GM12878 (cell line): ENCODE measurements at regions of chr9 and their contacts with region 1.

Region 1: DNA sequence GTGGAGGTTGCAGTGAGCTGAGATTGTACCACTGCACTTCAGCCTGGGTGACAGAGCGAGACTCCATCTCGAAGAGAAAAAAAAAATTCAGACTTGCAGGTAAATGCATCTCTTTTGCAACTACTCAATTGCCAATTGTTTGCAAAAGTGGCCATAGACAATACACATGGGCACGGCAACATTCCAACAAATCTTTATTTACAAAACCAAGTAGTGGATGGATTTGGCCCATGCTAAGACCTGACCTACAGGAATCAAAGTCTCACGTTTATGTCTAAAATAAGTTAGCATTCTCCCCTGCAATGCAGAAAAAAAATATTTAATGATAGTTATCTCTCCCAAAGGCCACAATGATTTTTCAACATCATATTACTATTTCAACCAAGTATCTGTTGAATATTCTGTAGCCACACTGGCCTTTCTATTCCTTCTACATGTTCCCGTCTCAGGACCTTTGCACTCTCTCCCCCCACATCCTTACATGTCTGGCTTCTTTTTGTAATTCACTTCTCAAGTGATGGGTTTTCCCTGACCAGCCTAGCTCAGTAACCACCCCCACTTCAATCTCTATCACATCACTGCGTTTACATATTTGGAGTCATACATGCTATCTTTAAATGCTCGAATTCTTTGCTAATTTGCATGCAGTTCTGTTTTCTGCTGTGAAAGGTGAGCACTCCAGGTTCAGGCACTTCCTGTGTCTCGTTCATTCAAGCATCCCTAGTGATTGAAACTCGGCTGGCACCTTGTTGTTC is 54.2 kb downstream of the FNBP1 start:
- DNase-seq: peak; percentile 99
- ATAC-seq: peak; percentile 65
- H3K4me3 ChIP-seq: peak overlapping the region; percentile 33
- H3K27ac ChIP-seq: peak overlapping the region; percentile 100
- H3K4me1 ChIP-seq: peaks cover 62% of the 10 kb centered on the region
- H3K27me3 ChIP-seq: no peaks in the 10 kb centered on the region
- CTCF ChIP-seq: no peak
- EP300 ChIP-seq: peak; percentile 74 to 96; a peak in 3 of 4 replicates
- POLR2A ChIP-seq: peak; percentile 70
- RAD21 ChIP-seq: peak; percentile 8; the same call in 1 of the 2 replicates

Region 2: DNA sequence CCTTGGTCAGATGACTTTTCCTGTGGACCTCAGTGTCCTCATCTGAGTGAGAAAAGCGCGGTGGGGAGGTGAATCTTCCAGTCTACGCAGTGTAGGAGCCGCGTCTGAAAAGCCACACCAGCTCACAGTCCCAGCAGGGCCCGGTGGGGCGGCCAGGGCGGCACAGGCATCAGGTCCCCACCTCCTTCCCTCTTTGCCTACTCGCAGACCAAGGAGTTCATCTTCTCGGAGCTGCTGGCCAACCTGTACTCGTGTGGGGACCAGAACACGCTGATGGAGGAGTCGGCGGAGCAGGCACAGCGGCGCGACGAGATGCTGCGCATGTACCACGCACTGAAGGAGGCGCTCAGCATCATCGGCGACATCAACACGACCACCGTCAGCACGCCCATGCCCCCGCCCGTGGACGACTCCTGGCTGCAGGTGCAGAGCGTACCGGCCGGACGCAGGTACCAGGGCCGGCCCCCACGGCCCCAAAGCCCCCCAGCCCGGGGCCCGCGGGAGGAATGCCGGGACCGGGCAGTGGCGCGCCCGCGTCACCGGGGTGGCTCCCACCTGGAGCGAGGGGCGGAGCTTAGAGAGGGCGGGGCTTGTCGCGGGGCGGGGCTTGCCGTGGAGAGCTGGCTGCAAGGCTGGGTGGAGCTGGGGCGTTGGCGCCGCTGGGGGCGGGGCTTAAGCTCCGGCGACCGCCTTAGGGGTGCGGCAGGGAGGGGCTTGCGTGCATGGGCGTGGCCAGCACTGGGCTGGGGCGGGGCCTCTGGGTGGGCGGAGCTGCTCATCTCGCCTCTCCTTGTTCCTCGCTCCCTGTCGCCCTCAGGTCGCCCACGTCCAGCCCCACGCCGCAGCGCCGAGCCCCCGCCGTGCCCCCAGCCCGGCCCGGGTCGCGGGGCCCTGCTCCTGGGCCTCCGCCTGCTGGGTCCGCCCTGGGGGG is 1738.6 kb before region 1 on chr9:
- CTCF ChIA-PET with region 1: no interaction called
- POLR2A ChIA-PET with region 1: no interaction called
- RAD21 ChIA-PET with region 1: no interaction called
- SMC1A ChIA-PET with region 1: no interaction called
- in situ Hi-C with region 1: no loop called
- intact Hi-C with region 1: no loop called
- DNase-seq: peak; percentile 25
- ATAC-seq: peak; percentile 96
- H3K4me3 ChIP-seq: peak overlapping the region; percentile 64; the same call in 1 of the 2 replicates
- H3K27ac ChIP-seq: no peak overlapping the region
- H3K4me1 ChIP-seq: no peaks in the 10 kb centered on the region
- H3K27me3 ChIP-seq: peaks cover 0 to 3% of the 10 kb centered on the region in 2 experiments; a peak in 2 of 4 replicates
- CTCF ChIP-seq: no peak
- EP300 ChIP-seq: no peak
- POLR2A ChIP-seq: no peak
- RAD21 ChIP-seq: no peak

Region 3: GRCh38 chr9:129962889-129963703 is 25.7 kb before region 1 on chr9:
- CTCF ChIA-PET with region 1: interaction called, 3 read pairs
- POLR2A ChIA-PET with region 1: interaction called, 6 read pairs
- RAD21 ChIA-PET with region 1: interaction called, 33 read pairs
- SMC1A ChIA-PET with region 1: interaction called, 66 read pairs
- in situ Hi-C with region 1: no loop called
- intact Hi-C with region 1: no loop called
- DNase-seq: peak; percentile 59
- ATAC-seq: peak; percentile 96
- H3K4me3 ChIP-seq: peak overlapping the region; percentile 64
- H3K27ac ChIP-seq: peak overlapping the region; percentile 90
- H3K4me1 ChIP-seq: peaks cover 47% of the 10 kb centered on the region
- H3K27me3 ChIP-seq: no peaks in the 10 kb centered on the region
- CTCF ChIP-seq: no peak
- EP300 ChIP-seq: no peak
- POLR2A ChIP-seq: peak; percentile 58
- RAD21 ChIP-seq: no peak

Region 4: GRCh38 chr9:130010151-130010988 is 21.6 kb after region 1 on chr9:
- CTCF ChIA-PET with region 1: interaction called, 5 read pairs
- POLR2A ChIA-PET with region 1: interaction called, 270 read pairs
- RAD21 ChIA-PET with region 1: interaction called, 172 read pairs
- SMC1A ChIA-PET with region 1: interaction called, 763 read pairs
- in situ Hi-C with region 1: no loop called
- intact Hi-C with region 1: loop called (anchors 1 kb)
- DNase-seq: no peak
- ATAC-seq: peak; percentile 59
- H3K4me3 ChIP-seq: peak overlapping the region; percentile 42; the same call in 1 of the 2 replicates
- H3K27ac ChIP-seq: peak overlapping the region; percentile 99
- H3K4me1 ChIP-seq: peaks cover 77% of the 10 kb centered on the region
- H3K27me3 ChIP-seq: no peaks in the 10 kb centered on the region
- CTCF ChIP-seq: no peak
- EP300 ChIP-seq: peak; percentile 77 to 95
- POLR2A ChIP-seq: peak; percentile 61
- RAD21 ChIP-seq: no peak

Region 5: DNA sequence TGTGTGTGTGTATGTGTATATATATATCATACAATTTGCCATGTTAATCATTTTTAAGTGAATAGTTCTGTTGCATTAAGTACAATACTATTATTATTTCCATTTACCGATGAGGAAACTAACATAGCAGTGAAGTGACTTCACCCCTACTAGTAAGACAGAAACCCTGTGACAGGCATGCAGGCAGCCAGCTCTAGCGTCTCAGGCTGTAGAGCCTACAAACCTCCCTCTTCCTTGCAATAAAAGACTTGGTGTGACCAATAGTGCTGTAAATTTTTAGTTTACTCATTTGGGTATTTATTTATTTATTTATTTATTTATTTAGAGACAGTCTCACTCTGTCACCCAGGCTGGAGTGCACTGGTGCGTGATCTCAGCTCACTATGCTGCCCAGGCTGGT is 29.5 kb after region 1 on chr9:
- CTCF ChIA-PET with region 1: interaction called, 7 read pairs
- POLR2A ChIA-PET with region 1: interaction called, 270 read pairs
- RAD21 ChIA-PET with region 1: interaction called, 418 read pairs
- SMC1A ChIA-PET with region 1: interaction called, 763 read pairs
- in situ Hi-C with region 1: no loop called
- intact Hi-C with region 1: loop called (anchors 1 kb)
- DNase-seq: no peak
- ATAC-seq: peak; percentile 26
- H3K4me3 ChIP-seq: no peak overlapping the region
- H3K27ac ChIP-seq: peak overlapping the region; percentile 83
- H3K4me1 ChIP-seq: peaks cover 88% of the 10 kb centered on the region
- H3K27me3 ChIP-seq: no peaks in the 10 kb centered on the region
- CTCF ChIP-seq: no peak
- EP300 ChIP-seq: no peak
- POLR2A ChIP-seq: no peak
- RAD21 ChIP-seq: no peak

Region 6: GRCh38 chr9:130023144-130023787 is 34.5 kb after region 1 on chr9:
- CTCF ChIA-PET with region 1: interaction called, 7 read pairs
- POLR2A ChIA-PET with region 1: interaction called, 270 read pairs
- RAD21 ChIA-PET with region 1: interaction called, 418 read pairs
- SMC1A ChIA-PET with region 1: interaction called, 763 read pairs
- in situ Hi-C with region 1: no loop called
- intact Hi-C with region 1: loop called (anchors 1 kb)
- DNase-seq: peak; percentile 88
- ATAC-seq: peak; percentile 47
- H3K4me3 ChIP-seq: peak overlapping the region; percentile 59
- H3K27ac ChIP-seq: peak overlapping the region; percentile 83
- H3K4me1 ChIP-seq: peaks cover 92% of the 10 kb centered on the region
- H3K27me3 ChIP-seq: no peaks in the 10 kb centered on the region
- CTCF ChIP-seq: no peak
- EP300 ChIP-seq: peak; percentile 9 to 85; a peak in 2 of 4 replicates
- POLR2A ChIP-seq: peak; percentile 58
- RAD21 ChIP-seq: no peak

Region 7: DNA sequence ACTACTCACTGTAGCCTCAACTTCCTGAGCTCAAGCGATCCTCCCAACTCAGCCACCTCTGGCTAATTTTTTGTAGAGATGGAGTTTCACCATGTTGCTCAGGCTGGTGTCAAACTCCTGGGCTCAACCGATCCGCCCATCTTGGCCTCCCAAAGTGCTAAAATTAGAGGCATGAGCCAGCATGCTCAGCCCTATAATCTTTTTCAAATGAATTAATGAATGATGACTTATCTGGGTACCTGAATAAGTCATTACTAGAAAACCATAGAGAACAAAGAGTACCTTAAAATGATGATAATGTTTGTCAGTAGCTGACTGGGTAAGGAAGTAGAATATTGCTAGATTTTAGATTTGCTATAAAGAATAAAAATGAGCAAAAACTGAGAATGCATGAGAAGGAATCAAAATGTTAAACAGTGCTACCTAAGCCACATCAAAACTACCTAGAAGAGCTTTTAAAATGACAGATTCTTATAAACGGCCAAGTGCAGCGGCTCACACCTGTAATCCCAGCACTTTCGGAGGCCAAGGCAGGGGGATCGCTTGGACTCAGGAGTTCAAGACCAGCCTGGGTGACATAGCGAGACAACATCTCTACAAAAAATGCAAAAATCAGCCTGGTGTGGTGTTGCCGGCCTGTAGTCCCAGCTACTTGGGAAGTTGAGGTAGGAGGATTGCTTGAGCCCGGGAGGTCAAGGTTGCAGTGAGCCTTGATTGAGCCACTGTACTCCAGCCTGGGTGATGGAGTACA is 40.6 kb after region 1 on chr9:
- CTCF ChIA-PET with region 1: interaction called, 7 read pairs
- POLR2A ChIA-PET with region 1: interaction called, 270 read pairs
- RAD21 ChIA-PET with region 1: interaction called, 418 read pairs
- SMC1A ChIA-PET with region 1: interaction called, 763 read pairs
- in situ Hi-C with region 1: no loop called
- intact Hi-C with region 1: no loop called
- DNase-seq: no peak
- ATAC-seq: peak; percentile 12
- H3K4me3 ChIP-seq: peak overlapping the region; percentile 46
- H3K27ac ChIP-seq: peak overlapping the region; percentile 83
- H3K4me1 ChIP-seq: peaks cover 85% of the 10 kb centered on the region
- H3K27me3 ChIP-seq: no peaks in the 10 kb centered on the region
- CTCF ChIP-seq: no peak
- EP300 ChIP-seq: peak; percentile 42 to 45; a peak in 2 of 4 replicates
- POLR2A ChIP-seq: no peak
- RAD21 ChIP-seq: no peak

Region 8: GRCh38 chr9:130512199-130512598 is 523.4 kb after region 1 on chr9:
- CTCF ChIA-PET with region 1: no interaction called
- POLR2A ChIA-PET with region 1: no interaction called
- RAD21 ChIA-PET with region 1: no interaction called
- SMC1A ChIA-PET with region 1: no interaction called
- in situ Hi-C with region 1: no loop called
- intact Hi-C with region 1: no loop called
- DNase-seq: no peak
- ATAC-seq: no peak
- H3K4me3 ChIP-seq: no peak overlapping the region
- H3K27ac ChIP-seq: no peak overlapping the region
- H3K4me1 ChIP-seq: no peaks in the 10 kb centered on the region
- H3K27me3 ChIP-seq: no peaks in the 10 kb centered on the region
- CTCF ChIP-seq: no peak
- EP300 ChIP-seq: no peak
- POLR2A ChIP-seq: no peak
- RAD21 ChIP-seq: no peak